Panc1 (cell line): ENCODE measurements at regions of chr7 and their contacts with region 1.

Region 1: GRCh38 chr7:114414156-114415063 is at the start of gene FOXP2:
- DNase-seq: no peak
- ATAC-seq: no peak; the same call in 1 of the 2 replicates
- H3K4me3 ChIP-seq: peak within 1 kb of the TSS; percentile 3 to 13; a peak in 3 of 4 replicates
- H3K27ac ChIP-seq: peak within 1 kb of the TSS; percentile 69
- H3K4me1 ChIP-seq: peaks cover 6% of the 10 kb centered on the region
- H3K27me3 ChIP-seq: no peaks in the 10 kb centered on the region; the same call in 1 of the 2 replicates
- CTCF ChIP-seq: no peak
- total RNA-seq, gene FOXP2: 0.54 TPM

Region 2: DNA sequence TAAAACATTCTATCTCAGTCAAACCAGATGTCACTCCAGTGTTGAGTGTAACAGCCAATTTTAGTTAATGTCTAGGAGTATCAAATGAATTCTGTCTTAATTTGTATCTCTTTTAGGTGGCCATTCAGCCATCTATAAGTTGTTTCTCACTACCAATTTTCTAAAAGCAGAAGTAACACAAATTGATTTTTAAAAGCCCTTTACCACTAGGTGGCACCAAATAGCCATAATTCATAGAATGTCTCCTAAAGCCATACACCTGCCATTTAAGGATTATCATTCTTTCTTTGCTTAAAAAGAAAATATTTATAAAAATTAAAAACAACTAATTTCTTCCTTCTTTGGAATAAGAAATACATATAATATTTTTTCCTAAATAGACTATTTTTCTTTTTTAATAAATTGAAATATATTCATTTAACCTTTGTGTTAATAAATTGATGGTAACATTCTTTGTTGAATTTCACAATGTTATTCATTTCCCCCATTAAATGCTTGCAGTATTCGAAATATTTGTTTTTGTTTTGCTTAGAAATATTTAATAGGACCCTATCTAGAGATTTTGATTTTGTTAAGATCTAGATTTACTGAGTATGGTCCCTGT is 387.8 kb before region 1 on chr7:
- CTCF ChIA-PET with region 1: no interaction called
- POLR2A ChIA-PET with region 1: no interaction called
- in situ Hi-C with region 1: no loop called
- intact Hi-C with region 1: loop called (anchors 10 kb)
- DNase-seq: peak; percentile 42
- ATAC-seq: no peak
- H3K4me3 ChIP-seq: no peak overlapping the region
- H3K27ac ChIP-seq: no peak overlapping the region
- H3K4me1 ChIP-seq: no peaks in the 10 kb centered on the region
- H3K27me3 ChIP-seq: no peaks in the 10 kb centered on the region
- CTCF ChIP-seq: peak; percentile 52; the same call in 1 of the 2 replicates

Region 3: DNA sequence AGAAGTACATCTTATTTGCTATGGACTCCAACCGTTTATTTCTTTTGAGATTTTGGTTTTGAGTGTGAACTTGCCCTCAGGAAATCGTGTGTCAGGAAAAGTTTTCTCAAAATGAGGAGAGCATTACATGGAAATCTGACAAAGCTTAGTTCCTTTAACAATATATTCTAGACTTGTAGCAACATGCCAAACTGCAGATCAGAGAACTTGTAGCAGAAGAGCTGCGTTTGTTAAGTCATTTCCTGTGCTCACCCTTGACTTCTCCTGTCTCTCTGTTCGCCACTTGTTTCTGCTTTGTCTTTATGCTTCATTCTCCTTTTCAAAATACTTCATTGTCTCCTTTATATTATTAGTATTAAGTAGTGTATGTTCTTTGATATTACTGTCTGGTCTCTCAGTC is 116.4 kb before region 1 on chr7:
- CTCF ChIA-PET with region 1: no interaction called
- POLR2A ChIA-PET with region 1: no interaction called
- in situ Hi-C with region 1: no loop called
- intact Hi-C with region 1: no loop called
- DNase-seq: no peak
- ATAC-seq: no peak
- H3K4me3 ChIP-seq: no peak overlapping the region
- H3K27ac ChIP-seq: no peak overlapping the region
- H3K4me1 ChIP-seq: no peaks in the 10 kb centered on the region; the same call in 1 of the 2 replicates
- H3K27me3 ChIP-seq: no peaks in the 10 kb centered on the region
- CTCF ChIP-seq: no peak

Region 4: DNA sequence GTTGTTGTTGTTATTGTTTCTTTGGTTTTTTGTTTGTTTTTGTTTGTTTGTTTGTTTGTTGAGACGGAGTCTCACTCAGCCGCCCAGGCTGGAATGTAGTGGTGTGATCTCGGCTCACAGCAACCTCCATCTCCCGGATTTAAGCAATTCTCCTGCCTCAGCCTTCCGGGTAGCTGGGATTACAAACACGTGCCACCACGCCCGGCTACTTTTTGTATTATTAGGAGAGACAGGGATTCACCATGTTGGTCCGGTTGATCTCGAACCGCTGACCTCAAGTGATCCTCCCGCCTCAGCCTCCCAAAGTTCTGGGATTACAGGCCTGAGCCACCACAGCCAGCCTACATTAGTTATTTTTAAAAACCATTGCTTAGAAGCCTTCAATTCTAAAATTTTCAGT is 45.2 kb after region 1 on chr7:
- CTCF ChIA-PET with region 1: no interaction called
- POLR2A ChIA-PET with region 1: no interaction called
- in situ Hi-C with region 1: no loop called
- intact Hi-C with region 1: no loop called
- DNase-seq: no peak
- ATAC-seq: no peak
- H3K4me3 ChIP-seq: no peak overlapping the region
- H3K27ac ChIP-seq: no peak overlapping the region
- H3K4me1 ChIP-seq: no peaks in the 10 kb centered on the region
- H3K27me3 ChIP-seq: no peaks in the 10 kb centered on the region; the same call in 1 of the 2 replicates
- CTCF ChIP-seq: no peak